ENCODE measurements at regions of chr14 and their contacts with region 1.

Region 1: DNA sequence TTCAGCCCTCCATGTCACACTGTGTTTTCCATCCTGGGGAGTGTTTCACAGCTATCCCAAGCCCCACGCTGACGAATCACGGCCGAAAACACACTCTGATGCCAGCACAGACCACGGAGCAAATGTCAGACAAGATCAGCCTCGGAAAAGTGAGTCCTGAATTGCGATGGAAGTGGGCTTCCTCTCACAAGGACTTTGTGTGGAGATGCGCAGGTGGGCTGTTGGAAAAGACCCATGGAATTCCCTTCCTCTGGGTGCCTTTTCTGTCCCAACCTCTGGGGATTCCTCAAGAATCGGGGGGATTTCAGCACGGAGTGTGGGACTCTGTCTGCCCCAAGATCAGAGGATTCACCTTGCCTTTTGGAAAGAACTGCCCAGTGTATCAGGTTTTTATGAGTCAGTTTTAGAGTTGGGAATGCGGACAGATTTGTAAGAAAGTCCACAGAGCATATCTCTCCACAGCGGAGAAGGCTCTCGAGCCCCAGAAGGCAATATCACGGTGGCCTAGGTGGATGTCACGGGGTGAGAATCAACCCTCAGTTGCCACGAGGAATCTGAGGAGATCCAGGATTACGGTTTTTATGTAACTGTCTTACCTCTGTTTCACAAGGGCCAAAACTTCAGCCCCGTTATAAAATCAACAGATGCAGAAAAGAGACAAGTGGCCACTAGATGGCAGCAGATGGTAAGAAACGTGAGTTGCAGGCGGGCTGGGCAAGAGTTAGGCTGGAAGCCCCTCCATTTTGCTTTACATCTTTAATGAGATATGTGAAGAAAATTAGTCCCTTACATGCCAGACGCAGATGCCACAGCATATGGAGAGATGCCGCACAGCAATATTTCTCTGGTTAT is 201.9 kb downstream of the DAD1 start:
- DNase-seq: no peak
- ATAC-seq: no peak
- H3K4me3 Mint-ChIP-seq: no peak overlapping the region
- H3K27ac Mint-ChIP-seq: no peak overlapping the region
- H3K4me1 Mint-ChIP-seq: no peaks in the 10 kb centered on the region
- H3K27me3 Mint-ChIP-seq: no peaks in the 10 kb centered on the region

Region 2: GRCh38 chr14:22319526-22320361 is 67.4 kb before region 1 on chr14:
- CTCF ChIA-PET with region 1: no interaction called
- POLR2A ChIA-PET with region 1: no interaction called
- intact Hi-C with region 1: loop called in 1 of 2 experiments (anchors 5 kb)
- DNase-seq: peak; percentile 11
- ATAC-seq: peak; percentile 19
- H3K4me3 Mint-ChIP-seq: peak overlapping the region; percentile 63
- H3K27ac Mint-ChIP-seq: peak overlapping the region; percentile 74
- H3K4me1 Mint-ChIP-seq: no peaks in the 10 kb centered on the region
- H3K27me3 Mint-ChIP-seq: no peaks in the 10 kb centered on the region

Region 3: DNA sequence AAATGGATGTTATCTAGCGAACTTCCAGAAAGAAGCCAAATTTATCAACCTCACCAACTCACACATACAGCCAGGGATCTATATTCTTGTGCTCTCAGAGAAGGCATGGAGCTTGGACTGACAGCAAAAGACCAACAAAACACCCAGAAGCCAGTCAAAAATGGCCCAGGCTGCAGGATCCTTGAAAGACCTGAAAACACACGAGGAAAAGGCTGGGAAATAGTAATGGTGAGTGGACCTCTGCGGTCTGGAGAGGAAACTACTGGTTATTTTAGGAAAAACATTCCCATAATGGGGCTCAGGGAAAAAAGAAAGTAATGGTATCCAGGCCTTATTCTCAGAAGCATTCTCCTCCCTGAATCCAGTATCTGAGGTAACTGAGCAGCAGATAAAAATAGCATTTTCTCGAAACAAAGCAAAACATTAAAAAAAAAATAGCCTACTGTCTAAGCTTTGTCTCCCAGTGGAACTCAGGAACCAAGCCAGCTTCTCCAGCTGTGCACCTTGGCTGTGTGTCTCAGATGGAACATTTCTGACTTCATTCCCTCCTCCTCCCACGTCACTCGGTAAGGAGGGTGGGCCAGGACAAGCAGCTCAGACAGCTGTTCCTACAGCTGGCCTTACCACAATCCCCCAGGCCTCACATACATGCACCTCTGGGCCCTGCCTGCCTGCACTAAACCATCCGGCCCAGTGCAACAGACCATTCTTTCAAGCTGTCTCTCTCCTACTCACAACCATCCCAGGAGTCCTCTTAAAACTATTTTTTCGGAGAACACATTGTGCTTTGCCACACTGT is 48.0 kb before region 1 on chr14:
- CTCF ChIA-PET with region 1: interaction called, 3 read pairs
- POLR2A ChIA-PET with region 1: no interaction called
- intact Hi-C with region 1: loop called in 1 of 2 experiments (anchors 5 kb)
- DNase-seq: no peak
- ATAC-seq: no peak
- H3K4me3 Mint-ChIP-seq: no peak overlapping the region
- H3K27ac Mint-ChIP-seq: no peak overlapping the region
- H3K4me1 Mint-ChIP-seq: no peaks in the 10 kb centered on the region
- H3K27me3 Mint-ChIP-seq: no peaks in the 10 kb centered on the region

Region 4: GRCh38 chr14:22476005-22476751 is 89.0 kb after region 1 on chr14:
- CTCF ChIA-PET with region 1: no interaction called
- POLR2A ChIA-PET with region 1: no interaction called
- intact Hi-C with region 1: loop called (anchors 1 to 2 kb)
- DNase-seq: no peak
- ATAC-seq: no peak
- H3K4me3 Mint-ChIP-seq: peak overlapping the region; percentile 44
- H3K27ac Mint-ChIP-seq: peak overlapping the region; percentile 60
- H3K4me1 Mint-ChIP-seq: no peaks in the 10 kb centered on the region
- H3K27me3 Mint-ChIP-seq: no peaks in the 10 kb centered on the region

Measured in activated CD4-positive, alpha-beta T cell treated with anti-CD3 and anti-CD28 coated beads for 36 hours (primary cell).